ENCODE measurements at regions of chr2 and their contacts with region 1.

Region 1: DNA sequence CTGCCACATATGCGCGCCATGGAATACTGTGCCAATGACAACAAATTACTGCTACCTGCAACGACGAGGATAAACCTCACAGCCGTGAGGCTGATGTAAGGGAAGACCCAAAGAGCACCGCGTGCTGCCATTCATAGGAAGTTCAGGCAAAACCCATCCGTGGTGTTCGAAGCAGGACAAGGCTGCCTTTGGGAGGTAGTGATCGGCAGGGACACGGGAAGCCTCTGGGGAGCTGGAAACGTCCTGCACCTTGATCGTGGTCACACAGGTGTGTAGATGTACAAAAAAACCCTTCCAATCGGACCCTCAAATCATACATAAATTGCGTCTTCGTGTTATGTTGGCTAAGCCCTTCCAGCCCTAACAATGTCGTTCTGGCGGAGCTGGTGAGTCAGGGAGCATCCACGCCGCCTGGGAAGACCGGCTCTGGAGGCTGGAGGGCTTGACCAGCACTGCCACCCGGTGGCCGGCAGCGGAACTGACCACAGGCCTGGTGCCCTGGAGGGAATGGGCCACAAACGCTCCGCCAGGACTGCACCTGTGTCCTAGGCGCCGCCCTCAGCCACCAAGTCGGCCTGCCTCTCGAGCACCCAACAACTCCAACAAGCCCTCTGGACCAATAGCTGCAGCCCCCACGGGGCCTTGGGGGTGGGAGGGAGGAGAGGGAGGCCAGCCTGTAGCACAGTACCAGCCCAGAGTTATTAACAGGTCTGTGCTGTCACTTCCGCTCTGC is 4.1 kb upstream of the NEURL3 start:
- DNase-seq: peak; percentile 76 to 98 (median 89)
- ATAC-seq: peak; percentile 96
- H3K4me3 ChIP-seq: no peak overlapping the region
- H3K27ac ChIP-seq: no peak overlapping the region
- H3K4me1 ChIP-seq: peaks cover 12 to 32% of the 10 kb centered on the region in 2 donors
- H3K27me3 ChIP-seq: peaks cover 0 to 6% of the 10 kb centered on the region in 2 donors
- CTCF ChIP-seq: peak; percentile 99

Region 2: GRCh38 chr2:96407041-96407918 is 102.0 kb before region 1 on chr2:
- intact Hi-C with region 1: loop called in 1 of 2 experiments (anchors 5 kb)
- DNase-seq: peak in 3 of 4 donors; percentile 61 to 82 (median 64)
- ATAC-seq: peak; percentile 89
- H3K4me3 ChIP-seq: no peak overlapping the region
- H3K27ac ChIP-seq: no peak overlapping the region
- H3K4me1 ChIP-seq: peaks cover 0 to 10% of the 10 kb centered on the region in 2 donors
- H3K27me3 ChIP-seq: no peaks in the 10 kb centered on the region
- CTCF ChIP-seq: peak; percentile 75 to 77